ENCODE measurements at regions of chr5 and their contacts with region 1.

Region 1: GRCh38 chr5:141878711-141879425 is 658 bp upstream of the PCDH1 start:
- DNase-seq: peak; percentile 79 to 89 (median 85)
- H3K4me3 ChIP-seq: peak overlapping the region; percentile 43
- H3K27ac ChIP-seq: no peak overlapping the region
- H3K4me1 ChIP-seq: peaks cover 12% of the 10 kb centered on the region
- H3K27me3 ChIP-seq: peaks cover 2% of the 10 kb centered on the region
- CTCF ChIP-seq: peak; percentile 77 to 93 (median 82)
- EP300 ChIP-seq: no peak
- POLR2A ChIP-seq: no peak

Region 2: DNA sequence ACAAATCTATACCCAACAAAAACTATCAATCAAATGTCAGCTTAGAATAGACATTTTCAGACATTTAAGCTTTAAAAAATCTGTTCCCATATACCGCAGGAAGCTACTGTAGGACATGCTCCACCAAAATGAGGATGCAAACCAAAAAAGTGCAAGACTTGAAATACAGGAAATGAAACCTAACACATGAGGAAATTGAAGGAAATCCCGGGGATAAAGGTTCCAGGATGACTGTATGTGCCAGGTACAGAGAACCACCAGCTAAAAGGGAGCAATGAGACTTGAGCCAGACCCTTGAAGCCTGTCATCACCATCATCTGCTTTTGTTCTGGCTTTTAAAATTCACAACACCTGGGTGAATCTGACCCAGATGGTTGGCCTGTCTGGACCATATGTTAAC is 281.5 kb before region 1 on chr5:
- intact Hi-C with region 1: no loop called
- DNase-seq: no peak
- H3K4me3 ChIP-seq: no peak overlapping the region
- H3K27ac ChIP-seq: no peak overlapping the region
- H3K4me1 ChIP-seq: no peaks in the 10 kb centered on the region
- H3K27me3 ChIP-seq: no peaks in the 10 kb centered on the region
- CTCF ChIP-seq: no peak
- EP300 ChIP-seq: no peak
- POLR2A ChIP-seq: no peak

Region 3: DNA sequence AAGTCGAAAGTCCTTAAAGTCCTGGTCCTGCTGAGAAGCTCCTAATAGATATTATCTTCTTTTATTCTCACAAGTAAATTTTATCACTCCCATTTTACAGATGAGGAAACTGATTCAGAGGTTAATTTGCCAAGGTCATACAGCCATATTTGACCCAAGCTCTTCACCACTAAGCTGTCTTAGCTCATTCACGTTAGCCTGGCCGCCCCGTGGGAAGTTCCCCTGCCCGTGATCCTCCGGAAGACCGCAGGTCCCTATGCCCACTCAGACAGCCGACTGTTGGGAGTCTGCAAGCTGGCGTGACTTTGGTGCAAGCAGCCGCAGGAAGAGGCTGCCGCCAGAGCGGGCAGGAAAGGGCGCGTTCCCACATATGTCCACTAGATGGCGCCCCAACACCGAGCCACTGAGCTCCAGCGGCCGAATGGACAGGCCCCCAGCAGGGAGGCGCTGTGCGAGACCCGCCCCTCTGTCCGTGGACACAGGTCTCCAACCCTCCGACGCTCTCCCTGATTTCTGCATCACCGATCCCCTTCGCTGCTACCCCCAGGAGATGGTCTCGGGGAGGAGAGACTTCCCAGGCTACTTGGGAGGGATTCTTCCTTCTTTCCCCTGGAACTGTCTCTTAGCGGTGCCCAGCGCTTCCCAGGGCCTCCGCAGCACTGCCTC is 186.9 kb before region 1 on chr5:
- intact Hi-C with region 1: loop called in 1 of 4 experiments (anchors 2 kb)
- DNase-seq: peak; percentile 72 to 90 (median 83)
- H3K4me3 ChIP-seq: no peak overlapping the region
- H3K27ac ChIP-seq: no peak overlapping the region
- H3K4me1 ChIP-seq: no peaks in the 10 kb centered on the region
- H3K27me3 ChIP-seq: no peaks in the 10 kb centered on the region
- CTCF ChIP-seq: peak; percentile 94 to 95 (median 95)
- EP300 ChIP-seq: no peak
- POLR2A ChIP-seq: no peak

Region 4: DNA sequence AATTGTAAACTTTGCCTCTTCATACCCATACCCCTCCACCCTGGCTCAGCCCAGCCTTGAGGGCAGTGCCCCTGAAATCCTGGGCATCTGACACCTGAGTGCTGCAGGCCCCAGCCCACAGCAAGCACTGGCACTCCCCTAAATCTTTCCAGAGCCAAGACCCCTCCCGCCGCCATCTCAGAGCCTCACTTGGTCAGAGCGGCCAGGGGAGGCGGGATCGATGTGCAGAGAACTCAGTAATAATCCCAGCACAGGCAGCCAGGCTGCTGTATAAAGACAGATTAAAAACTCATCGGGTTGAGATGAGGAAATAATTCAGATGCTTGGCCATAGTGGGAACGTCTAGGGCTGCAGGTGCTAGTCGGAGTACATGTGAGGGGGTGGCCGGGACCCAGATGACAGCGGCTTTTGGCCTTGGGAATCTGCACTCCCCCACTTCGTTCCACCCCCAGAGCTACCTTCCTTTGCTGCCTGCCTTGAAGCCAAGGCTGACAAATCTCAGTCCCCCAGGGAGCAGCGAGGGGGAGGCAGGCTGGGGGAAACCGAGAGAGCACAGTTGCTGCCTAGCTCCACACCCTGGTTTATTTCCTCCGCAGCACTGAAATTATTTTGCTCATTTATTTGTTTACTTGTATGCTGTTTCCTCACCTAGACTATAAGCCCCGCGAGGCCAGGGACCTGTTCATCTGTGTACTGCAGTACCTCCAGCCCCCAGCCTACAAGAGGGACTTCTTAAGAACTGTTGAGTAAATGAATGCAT is 177.3 kb before region 1 on chr5:
- intact Hi-C with region 1: loop called in 3 of 4 experiments (anchors 2 to 5 kb)
- DNase-seq: no peak
- H3K4me3 ChIP-seq: no peak overlapping the region
- H3K27ac ChIP-seq: no peak overlapping the region
- H3K4me1 ChIP-seq: no peaks in the 10 kb centered on the region
- H3K27me3 ChIP-seq: no peaks in the 10 kb centered on the region
- CTCF ChIP-seq: no peak
- EP300 ChIP-seq: no peak
- POLR2A ChIP-seq: no peak

Region 5: DNA sequence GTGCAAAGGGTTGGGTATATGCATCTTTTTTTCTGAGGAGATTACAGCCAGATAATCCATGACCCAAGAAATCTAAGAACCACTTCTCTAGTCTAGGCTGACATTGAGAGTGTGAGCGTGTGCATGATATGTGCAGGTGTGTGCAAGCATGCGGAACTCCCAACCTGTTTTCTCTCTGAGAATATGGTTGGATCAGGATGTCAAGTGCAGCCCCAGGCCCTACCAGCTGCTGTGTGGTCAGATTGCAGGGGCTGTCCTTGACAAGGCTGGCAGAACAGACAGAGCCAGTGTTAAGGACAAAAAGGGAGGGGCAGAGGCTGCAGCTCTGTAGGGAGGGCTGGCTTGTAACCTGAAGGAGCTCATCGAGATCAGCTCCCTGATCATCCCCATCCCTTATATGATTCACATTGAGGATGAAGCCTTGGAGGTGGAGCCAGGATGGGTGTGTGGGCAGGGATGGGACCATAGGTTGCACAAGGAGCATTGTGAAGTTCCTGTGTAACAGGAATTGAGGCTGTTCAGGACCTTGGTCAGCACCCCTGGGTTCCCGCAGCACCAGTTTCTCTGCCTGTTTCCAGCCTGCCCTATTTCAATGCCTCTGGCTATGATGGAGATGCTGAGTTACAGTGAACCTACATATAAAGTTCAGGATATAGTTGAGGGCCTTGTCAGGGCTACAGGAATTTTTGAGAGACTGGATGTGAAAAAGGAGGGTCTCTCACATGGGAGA is 144.2 kb before region 1 on chr5:
- intact Hi-C with region 1: no loop called
- DNase-seq: peak in 2 of 5 donors; percentile 19 to 38
- H3K4me3 ChIP-seq: no peak overlapping the region
- H3K27ac ChIP-seq: no peak overlapping the region
- H3K4me1 ChIP-seq: no peaks in the 10 kb centered on the region
- H3K27me3 ChIP-seq: no peaks in the 10 kb centered on the region
- CTCF ChIP-seq: no peak
- EP300 ChIP-seq: no peak
- POLR2A ChIP-seq: no peak

Region 6: GRCh38 chr5:141821361-141821925 is 57.4 kb before region 1 on chr5:
- intact Hi-C with region 1: loop called in 1 of 4 experiments (anchors 5 kb)
- DNase-seq: no peak
- H3K4me3 ChIP-seq: no peak overlapping the region
- H3K27ac ChIP-seq: no peak overlapping the region
- H3K4me1 ChIP-seq: no peaks in the 10 kb centered on the region
- H3K27me3 ChIP-seq: no peaks in the 10 kb centered on the region
- CTCF ChIP-seq: no peak
- EP300 ChIP-seq: no peak
- POLR2A ChIP-seq: no peak

Region 7: DNA sequence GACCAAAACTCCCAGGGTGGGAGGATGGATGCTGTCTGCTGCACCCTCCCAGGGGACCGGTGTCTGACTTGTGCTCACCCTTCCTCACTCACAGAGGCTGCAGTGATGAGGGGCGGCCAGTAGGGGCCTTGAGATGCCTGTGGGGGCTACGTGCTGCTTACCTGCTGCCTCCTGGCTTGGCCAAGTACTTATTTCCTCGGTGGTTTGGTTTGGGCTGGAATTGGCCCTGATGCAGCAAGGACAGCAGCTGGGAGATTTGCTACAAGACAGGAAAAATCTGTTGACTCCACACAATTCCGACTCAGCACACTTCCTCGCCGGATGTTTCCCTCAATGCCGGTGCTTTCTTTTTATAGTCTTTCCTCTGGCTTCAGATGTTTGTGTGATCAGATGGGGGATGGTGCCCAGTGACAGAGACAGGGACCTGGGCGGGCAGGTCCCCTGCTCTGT is 72.5 kb after region 1 on chr5:
- intact Hi-C with region 1: loop called in 1 of 4 experiments (anchors 10 kb)
- DNase-seq: no peak
- H3K4me3 ChIP-seq: no peak overlapping the region
- H3K27ac ChIP-seq: no peak overlapping the region
- H3K4me1 ChIP-seq: no peaks in the 10 kb centered on the region
- H3K27me3 ChIP-seq: no peaks in the 10 kb centered on the region
- CTCF ChIP-seq: no peak
- EP300 ChIP-seq: no peak
- POLR2A ChIP-seq: no peak